ENCODE measurements at regions of chr15 and their contacts with region 1.

Region 1: GRCh38 chr15:88476635-88477060 is 9.1 kb downstream of the MRPS11 start:
- DNase-seq: no peak
- H3K4me3 Mint-ChIP-seq: no peak overlapping the region
- H3K27ac Mint-ChIP-seq: no peak overlapping the region
- H3K4me1 Mint-ChIP-seq: peaks cover 4% of the 10 kb centered on the region
- H3K27me3 Mint-ChIP-seq: no peaks in the 10 kb centered on the region

Region 2: GRCh38 chr15:88610701-88611231 is 134.1 kb after region 1 on chr15:
- intact Hi-C with region 1: loop called (anchors 5 kb)
- DNase-seq: no peak
- H3K4me3 Mint-ChIP-seq: no peak overlapping the region
- H3K27ac Mint-ChIP-seq: no peak overlapping the region
- H3K4me1 Mint-ChIP-seq: peaks cover 6% of the 10 kb centered on the region
- H3K27me3 Mint-ChIP-seq: peaks cover 61% of the 10 kb centered on the region

Region 3: DNA sequence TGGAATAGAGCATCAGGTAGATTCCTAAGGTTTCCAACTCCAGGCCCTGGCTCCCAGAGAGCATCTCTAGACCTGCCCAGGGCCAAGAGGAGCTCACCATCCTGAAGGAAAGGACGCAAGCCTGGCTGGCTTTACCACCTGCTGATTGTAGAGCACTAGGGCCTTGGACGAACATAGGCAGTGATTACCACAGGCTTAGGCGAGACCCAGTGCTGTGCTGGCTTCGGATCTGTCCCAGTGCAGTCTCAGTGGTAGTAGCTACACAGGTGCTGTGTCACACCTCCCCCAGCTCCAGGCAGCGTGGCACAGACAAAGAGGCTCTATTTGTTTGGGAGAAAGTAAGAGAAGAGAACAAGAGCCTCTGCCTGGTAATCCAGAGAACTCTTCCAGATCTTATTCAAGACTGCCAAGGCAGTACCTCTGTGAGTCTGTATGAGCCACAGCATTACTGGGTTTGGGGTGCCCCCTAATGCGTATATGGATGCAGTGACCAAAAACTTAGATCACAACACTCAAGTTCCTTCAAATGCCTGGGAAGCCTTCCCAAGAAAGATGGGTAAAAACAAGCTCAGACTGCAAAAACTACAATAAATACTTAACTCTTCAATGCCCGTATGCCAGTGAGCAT is 187.6 kb after region 1 on chr15:
- intact Hi-C with region 1: loop called (anchors 5 kb)
- DNase-seq: no peak
- H3K4me3 Mint-ChIP-seq: no peak overlapping the region
- H3K27ac Mint-ChIP-seq: no peak overlapping the region
- H3K4me1 Mint-ChIP-seq: peaks cover 6% of the 10 kb centered on the region
- H3K27me3 Mint-ChIP-seq: peaks cover 16% of the 10 kb centered on the region